ENCODE measurements at regions of chr14 and their contacts with region 1.

Region 1: GRCh38 chr14:73467377-73467776 is 9.0 kb upstream of the NUMB start:
- DNase-seq: no peak

Region 2: DNA sequence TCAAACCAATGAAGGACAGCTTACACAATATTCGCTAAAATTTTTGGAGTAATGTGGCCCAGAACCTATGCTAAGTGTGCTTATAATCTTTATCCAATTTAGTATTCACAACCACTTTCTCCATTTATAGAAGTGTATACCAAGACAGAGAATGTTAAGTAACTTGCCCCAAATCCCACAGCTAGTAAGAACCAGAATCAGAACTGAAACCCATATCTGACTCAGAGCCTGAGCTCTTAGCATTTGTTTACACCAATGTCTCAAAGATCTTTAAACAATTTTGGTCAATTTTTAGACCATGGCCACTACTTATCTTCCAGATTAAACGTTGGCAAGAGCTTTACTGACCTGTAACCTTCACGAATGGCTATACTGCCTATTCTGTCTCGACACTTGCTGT is 177.1 kb before region 1 on chr14:
- intact Hi-C with region 1: loop called (anchors 5 to 10 kb)
- DNase-seq: no peak